ENCODE measurements at regions of chr1 and their contacts with region 1.

Region 1: DNA sequence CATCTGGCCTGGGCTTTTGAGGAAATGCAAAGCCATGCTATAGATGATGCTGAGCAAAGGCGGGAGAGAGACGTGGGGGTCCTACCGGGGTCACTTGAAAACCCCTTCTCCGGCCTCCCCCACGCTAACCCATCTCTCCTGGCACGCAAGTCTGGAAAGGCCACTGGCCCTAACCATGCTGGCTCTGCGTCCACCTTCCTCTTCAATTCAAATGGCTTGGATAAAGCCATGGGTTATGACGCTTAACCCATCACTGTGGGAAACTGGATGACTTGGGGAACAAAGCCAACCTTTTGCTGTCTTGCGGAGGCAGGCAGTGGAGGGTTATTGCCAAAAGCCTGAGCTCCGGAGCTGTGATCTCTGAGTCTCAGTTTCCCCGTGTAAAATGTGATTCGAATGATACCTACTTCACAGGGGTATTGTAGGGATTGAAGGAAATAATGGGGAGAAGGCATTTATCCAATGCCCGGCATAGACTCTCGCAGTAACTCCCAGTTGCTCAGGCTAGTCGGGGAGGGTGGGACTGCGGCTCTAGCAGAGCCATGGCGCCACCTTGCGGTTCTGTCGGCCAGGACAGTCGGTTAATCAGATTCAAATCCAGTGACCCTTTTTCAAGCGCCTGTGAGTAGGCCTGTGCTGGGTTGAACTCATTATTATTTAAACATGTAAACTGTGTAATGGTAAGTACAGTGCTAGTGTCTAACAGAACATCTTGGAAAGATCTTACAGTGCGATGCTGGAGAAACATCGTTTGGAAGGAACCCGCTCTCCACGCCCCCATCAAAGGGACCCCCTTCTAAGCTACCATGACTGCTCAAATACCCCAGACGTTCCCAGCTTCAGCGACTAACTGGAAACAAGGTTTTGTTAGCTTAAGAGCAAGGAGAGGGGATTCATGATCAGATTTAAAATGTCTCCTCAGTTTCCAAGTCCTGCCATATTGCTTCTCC is 20.3 kb downstream of the NEK2 start:
- DNase-seq: peak; percentile 69
- ATAC-seq: peak; percentile 95
- H3K4me3 ChIP-seq: no peak overlapping the region
- H3K27ac ChIP-seq: no peak overlapping the region
- H3K4me1 ChIP-seq: peaks cover 41% of the 10 kb centered on the region
- H3K27me3 ChIP-seq: no peaks in the 10 kb centered on the region; a peak in 1 of 5 replicates
- CTCF ChIP-seq: peak; percentile 94
- EP300 ChIP-seq: no peak
- POLR2A ChIP-seq: no peak
- RAD21 ChIP-seq: peak; percentile 92

Region 2: DNA sequence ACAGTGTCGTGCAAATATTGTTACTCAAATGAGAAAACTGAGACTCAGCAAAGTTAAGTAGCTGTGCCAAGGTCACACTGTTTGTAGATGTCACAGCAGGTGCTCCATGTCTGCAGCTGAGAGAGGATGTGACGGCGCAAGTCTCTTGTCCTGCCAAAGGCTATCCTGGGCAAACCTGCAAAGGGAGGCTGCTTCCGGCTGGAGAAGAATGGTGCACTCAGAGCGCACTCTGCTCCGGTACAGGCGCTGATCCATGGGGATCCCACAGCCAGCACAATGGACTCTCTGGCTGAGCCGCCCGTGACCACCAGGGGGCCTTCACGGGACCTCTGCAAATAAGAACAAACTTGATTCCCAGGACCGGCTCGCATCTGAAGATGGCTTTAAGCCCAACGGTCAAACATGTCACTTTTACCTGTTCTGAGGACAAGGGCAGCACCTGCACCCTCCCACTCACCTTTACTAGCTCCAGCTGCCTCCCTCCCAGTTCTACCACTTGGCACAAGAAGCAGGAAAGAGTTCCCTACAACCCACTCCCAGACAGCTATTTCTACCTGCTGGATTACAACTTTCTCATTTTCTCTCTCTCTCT is 185.1 kb before region 1 on chr1:
- CTCF ChIA-PET with region 1: interaction called, 11 read pairs
- POLR2A ChIA-PET with region 1: no interaction called
- in situ Hi-C with region 1: no loop called
- intact Hi-C with region 1: loop called (anchors 2 kb)
- DNase-seq: peak; percentile 72
- ATAC-seq: peak; percentile 100
- H3K4me3 ChIP-seq: no peak overlapping the region
- H3K27ac ChIP-seq: no peak overlapping the region
- H3K4me1 ChIP-seq: peaks cover 6% of the 10 kb centered on the region; the same call in 1 of the 2 replicates
- H3K27me3 ChIP-seq: peaks cover 0 to 12% of the 10 kb centered on the region in 2 experiments; a peak in 2 of 5 replicates
- CTCF ChIP-seq: peak; percentile 91
- EP300 ChIP-seq: no peak
- POLR2A ChIP-seq: no peak
- RAD21 ChIP-seq: peak; percentile 50

Region 3: GRCh38 chr1:211514030-211514754 is 140.9 kb before region 1 on chr1:
- CTCF ChIA-PET with region 1: interaction called, 24 read pairs
- POLR2A ChIA-PET with region 1: interaction called, 4 read pairs
- in situ Hi-C with region 1: loop called (anchors 5 kb)
- intact Hi-C with region 1: loop called (anchors 1 kb)
- DNase-seq: peak; percentile 82
- ATAC-seq: peak; percentile 82
- H3K4me3 ChIP-seq: peak overlapping the region in 1 of 3 experiments; percentile 60; a peak in 2 of 6 replicates
- H3K27ac ChIP-seq: no peak overlapping the region
- H3K4me1 ChIP-seq: peaks cover 49% of the 10 kb centered on the region
- H3K27me3 ChIP-seq: peaks cover 0 to 12% of the 10 kb centered on the region in 2 experiments; a peak in 2 of 5 replicates
- CTCF ChIP-seq: peak; percentile 95
- EP300 ChIP-seq: no peak
- POLR2A ChIP-seq: no peak
- RAD21 ChIP-seq: peak; percentile 81

Region 4: DNA sequence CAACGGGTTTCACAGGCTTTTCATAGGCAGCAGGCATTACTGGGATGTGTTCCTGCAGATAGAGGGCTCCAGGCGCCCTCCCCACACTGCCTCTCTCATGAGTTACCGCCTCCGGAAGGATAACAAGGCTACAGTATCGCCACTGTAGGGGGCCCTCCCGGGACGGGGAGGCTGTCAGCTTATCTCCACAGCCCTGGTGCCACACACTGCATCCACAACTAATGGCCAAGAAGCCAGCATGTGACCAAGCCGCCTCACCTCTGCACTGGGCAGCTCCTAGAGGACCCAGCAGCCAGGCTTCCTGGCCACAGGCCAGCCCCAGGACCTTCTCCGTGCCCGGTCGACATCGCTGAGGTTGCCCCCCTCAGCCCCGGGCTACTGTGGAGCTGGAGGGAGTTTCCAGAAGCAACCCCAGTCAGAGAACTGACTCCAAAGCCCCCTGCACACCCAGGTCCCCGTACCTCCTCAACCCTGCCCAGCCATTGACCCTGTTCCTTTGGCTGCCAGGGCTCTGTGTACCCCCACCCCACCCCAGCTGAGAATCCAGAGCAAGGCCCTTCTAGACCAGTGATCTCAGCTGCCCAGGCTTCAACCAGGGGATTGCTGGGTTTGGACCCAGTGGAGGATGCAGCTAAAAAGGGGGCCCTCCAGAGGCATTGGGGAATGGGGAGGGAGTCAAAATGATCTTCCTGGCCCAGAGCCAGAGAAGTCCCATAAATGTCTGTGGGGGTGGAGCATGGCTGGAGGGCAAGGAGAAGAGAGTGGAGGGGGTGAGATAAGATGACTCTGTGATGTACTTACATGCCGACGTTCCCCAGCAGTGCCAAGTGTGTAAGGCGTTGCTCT is 24.7 kb before region 1 on chr1:
- CTCF ChIA-PET with region 1: no interaction called
- POLR2A ChIA-PET with region 1: no interaction called
- in situ Hi-C with region 1: no loop called
- intact Hi-C with region 1: loop called (anchors 2 kb)
- DNase-seq: peak; percentile 83
- ATAC-seq: peak; percentile 94
- H3K4me3 ChIP-seq: peak overlapping the region; percentile 31 to 63 (median 47); a peak in 4 of 6 replicates
- H3K27ac ChIP-seq: no peak overlapping the region
- H3K4me1 ChIP-seq: peaks cover 45% of the 10 kb centered on the region
- H3K27me3 ChIP-seq: peaks cover 0 to 1% of the 10 kb centered on the region in 2 experiments; a peak in 1 of 5 replicates
- CTCF ChIP-seq: peak; percentile 70
- EP300 ChIP-seq: no peak
- POLR2A ChIP-seq: no peak
- RAD21 ChIP-seq: no peak

Region 5: DNA sequence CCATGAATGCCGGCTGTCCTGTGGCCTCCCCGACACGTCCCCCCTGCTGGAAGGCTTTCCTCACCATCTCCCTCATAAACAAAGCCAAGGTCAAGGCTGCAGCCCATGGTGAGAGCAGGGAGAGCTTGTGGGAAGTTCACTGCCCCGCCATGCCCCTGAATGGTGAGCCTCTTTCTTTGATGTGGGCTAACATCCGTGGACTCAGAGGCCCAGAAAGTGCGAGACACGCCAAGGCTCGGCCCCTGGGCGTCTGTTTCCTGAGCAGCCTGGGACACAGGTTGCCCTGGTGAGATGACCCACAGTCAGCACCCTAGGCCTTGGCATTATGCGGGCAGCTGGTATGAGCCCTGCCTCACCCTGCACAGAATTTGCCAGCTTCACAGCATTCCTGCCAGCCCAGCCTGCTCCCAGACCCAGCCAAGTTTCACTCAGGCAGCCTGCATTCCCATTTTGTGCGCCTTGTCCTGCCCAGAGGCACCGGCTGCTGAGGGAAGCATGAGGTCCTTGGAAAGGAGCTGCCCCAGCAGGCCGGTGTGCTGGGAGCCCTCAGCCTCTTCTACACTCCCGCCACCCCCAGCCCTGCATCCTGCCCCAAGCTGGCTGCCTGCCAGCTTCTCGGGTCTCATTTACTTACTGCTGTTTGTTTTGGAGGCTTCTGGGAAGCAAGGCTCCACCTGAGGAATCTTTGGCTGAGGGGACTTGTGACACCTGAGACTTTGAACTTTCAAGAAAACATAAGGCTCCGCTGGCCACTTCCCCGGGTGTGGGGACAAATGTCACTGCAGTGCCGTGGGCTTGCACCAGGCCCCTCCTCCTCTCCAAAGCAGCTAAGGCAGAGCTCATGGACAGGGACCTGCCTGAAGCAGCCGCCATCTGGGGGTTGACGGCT is 11.5 kb before region 1 on chr1:
- CTCF ChIA-PET with region 1: no interaction called
- POLR2A ChIA-PET with region 1: interaction called, 17 read pairs
- in situ Hi-C with region 1: no loop called
- intact Hi-C with region 1: no loop called
- DNase-seq: peak; percentile 96
- ATAC-seq: peak; percentile 75
- H3K4me3 ChIP-seq: peak overlapping the region; percentile 5 to 64 (median 53); a peak in 5 of 6 replicates
- H3K27ac ChIP-seq: peak overlapping the region; percentile 26
- H3K4me1 ChIP-seq: peaks cover 85% of the 10 kb centered on the region
- H3K27me3 ChIP-seq: no peaks in the 10 kb centered on the region
- CTCF ChIP-seq: 0 out of 2 replicates have a peak, but pooled peaks have one; percentile 18
- EP300 ChIP-seq: peak in 1 of 2 experiments; percentile 93; a peak in 2 of 4 replicates
- POLR2A ChIP-seq: no peak
- RAD21 ChIP-seq: 0 out of 2 replicates have a peak, but pooled peaks have one; percentile 12

Region 6: DNA sequence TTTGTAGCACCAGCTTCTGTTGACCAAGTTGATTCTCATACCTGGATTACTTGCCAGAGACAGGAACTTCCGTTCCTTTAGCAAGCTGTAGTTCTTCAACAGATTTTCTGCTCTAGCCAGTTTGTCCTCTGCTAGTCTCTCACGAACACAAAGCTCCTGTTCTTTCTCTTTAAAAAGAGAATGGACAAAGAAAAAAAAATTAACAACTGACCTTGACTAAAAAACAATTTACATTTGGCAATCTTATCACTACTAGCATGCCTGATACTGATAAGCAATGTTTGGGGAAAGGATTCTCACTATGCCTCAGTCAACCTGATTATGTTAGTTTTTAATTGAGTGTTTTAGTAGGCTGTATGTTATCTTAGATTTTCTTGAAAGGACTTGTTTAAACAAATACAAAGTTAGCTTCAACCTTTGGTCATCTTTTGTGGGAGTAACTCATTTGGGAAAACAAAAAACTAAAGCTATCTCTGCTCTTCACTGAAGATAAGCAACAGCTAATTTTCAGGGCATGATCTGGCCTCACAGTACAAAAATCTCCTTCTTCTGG is 12.0 kb after region 1 on chr1:
- CTCF ChIA-PET with region 1: no interaction called
- POLR2A ChIA-PET with region 1: no interaction called
- in situ Hi-C with region 1: no loop called
- intact Hi-C with region 1: loop called (anchors 1 kb)
- DNase-seq: peak; percentile 97
- ATAC-seq: peak; percentile 98
- H3K4me3 ChIP-seq: no peak overlapping the region
- H3K27ac ChIP-seq: peak overlapping the region; percentile 52
- H3K4me1 ChIP-seq: peaks cover 53% of the 10 kb centered on the region
- H3K27me3 ChIP-seq: no peaks in the 10 kb centered on the region
- CTCF ChIP-seq: no peak
- EP300 ChIP-seq: peak in 1 of 2 experiments; percentile 97; a peak in 2 of 4 replicates
- POLR2A ChIP-seq: no peak
- RAD21 ChIP-seq: no peak

Measured in HepG2 (cell line).